HEK293 (cell line): ENCODE measurements at regions of chr10 and their contacts with region 1.

Region 1: DNA sequence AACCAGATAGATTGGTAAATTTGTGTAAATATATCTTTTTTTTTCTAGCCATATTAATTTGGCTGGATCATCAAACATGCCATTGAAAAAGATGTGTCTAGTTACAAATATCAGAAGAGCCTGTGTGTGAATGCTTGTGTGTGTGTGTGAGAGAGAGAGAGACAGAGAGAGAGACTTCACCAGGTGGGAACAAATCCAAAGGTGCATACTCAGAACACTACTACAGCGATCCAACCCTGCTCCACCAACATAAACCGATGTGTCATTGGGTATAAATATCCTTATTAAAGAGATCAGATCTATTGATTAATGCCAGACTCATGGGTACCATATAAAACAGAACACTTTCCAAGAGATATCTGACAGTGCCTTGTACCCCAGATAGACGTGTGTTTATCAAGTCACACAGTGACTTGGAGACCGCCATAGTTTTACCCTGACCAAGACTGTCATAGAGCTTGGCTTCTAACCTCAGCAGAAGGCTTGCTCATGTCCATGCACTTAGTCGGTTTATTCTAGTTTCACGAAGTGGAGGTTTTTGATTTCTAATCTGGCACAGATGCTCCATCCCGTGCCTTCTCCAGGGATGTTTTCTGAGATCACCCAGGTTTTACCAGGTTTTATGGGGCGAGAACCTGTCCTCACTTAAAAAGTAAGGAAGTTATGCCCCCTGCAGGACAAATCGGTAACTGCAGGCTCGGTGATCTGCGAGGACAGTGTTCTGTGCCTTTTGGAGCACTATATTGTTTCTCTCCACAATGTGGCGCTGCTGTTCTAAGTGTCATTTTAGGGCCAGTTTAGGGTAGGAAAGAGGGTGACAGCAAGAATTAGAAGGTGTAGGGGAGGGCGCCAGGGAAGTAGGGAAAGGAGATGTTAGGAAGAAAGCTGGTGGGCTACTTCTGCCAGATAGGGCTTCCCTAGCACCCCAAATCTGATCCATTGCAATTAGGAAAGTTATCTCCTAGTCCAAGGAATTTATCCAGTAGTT is 29.3 kb upstream of the WNT8B start:
- H3K4me3 ChIP-seq: no peak overlapping the region
- H3K27ac ChIP-seq: no peak overlapping the region
- H3K4me1 ChIP-seq: no peaks in the 10 kb centered on the region
- CTCF ChIP-seq: peak; percentile 99

Region 2: DNA sequence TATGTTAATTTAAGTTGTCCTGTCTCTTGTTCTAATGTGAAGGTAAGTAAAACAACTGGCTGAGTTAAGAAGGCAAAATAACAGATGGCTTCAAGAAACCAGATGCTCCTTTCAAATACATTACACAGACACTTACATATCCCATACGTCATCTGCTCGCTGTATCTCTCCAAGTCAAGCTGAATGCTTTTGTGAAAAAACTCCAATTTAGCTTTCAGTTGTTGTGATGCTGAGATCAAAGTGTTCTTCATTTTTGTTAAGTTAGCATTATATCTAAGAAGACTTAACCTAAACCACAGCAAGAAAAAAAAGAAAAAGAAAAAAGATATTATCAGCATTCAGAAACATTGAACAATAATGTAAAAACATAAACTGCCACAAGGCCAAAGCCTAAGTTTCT is 229.2 kb before region 1 on chr10:
- CTCF ChIA-PET with region 1: no interaction called
- POLR2A ChIA-PET with region 1: no interaction called
- H3K4me3 ChIP-seq: no peak overlapping the region
- H3K27ac ChIP-seq: no peak overlapping the region
- H3K4me1 ChIP-seq: no peaks in the 10 kb centered on the region
- CTCF ChIP-seq: no peak

Region 3: DNA sequence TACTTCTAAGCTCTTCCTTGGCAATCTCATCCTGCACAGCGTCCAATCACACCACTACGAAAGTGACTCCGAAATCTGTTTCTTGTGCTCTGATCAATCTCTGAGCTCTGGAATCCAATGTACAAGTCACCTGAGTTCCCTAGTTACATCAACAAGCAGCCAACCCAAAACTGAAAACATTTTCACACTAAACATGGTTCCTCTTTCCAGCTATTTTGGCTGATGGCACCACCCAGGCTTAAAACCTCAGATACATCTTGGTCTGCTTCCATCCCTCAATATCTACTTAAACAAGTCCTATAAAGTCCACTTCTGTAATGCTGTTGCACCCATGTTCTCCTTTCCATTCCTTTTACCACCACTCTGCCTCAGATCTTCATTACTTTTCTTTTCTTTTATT is 150.6 kb before region 1 on chr10:
- CTCF ChIA-PET with region 1: no interaction called
- POLR2A ChIA-PET with region 1: no interaction called
- H3K4me3 ChIP-seq: no peak overlapping the region
- H3K27ac ChIP-seq: no peak overlapping the region
- H3K4me1 ChIP-seq: no peaks in the 10 kb centered on the region; the same call in 1 of the 2 replicates
- CTCF ChIP-seq: no peak

Region 4: GRCh38 chr10:100303724-100304319 is 129.7 kb before region 1 on chr10:
- CTCF ChIA-PET with region 1: interaction called, 23 read pairs
- POLR2A ChIA-PET with region 1: no interaction called
- H3K4me3 ChIP-seq: no peak overlapping the region
- H3K27ac ChIP-seq: no peak overlapping the region
- H3K4me1 ChIP-seq: no peaks in the 10 kb centered on the region
- CTCF ChIP-seq: peak; percentile 28; the same call in 1 of the 2 replicates

Region 5: DNA sequence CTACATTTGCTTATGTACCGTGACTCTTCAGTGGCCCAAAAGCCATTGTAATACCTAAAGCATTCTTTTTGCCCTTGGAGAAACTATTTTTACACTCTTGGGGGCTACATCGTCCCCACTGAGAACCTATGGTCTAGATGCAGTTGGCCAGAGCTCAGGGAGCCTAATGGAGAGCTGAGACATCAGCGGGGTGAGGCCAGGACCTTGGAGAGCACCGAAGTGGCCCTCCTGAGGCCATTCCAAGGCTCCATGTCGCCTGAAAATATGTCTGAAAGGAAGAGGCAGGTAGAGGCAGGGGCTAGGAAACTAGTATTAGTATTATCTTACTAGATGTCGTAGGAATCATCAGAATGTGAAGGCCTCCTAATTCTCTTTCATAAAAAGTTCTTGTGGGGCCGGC is 108.4 kb before region 1 on chr10:
- CTCF ChIA-PET with region 1: interaction called, 10 read pairs
- POLR2A ChIA-PET with region 1: no interaction called
- H3K4me3 ChIP-seq: no peak overlapping the region
- H3K27ac ChIP-seq: no peak overlapping the region
- H3K4me1 ChIP-seq: no peaks in the 10 kb centered on the region
- CTCF ChIP-seq: no peak

Region 6: GRCh38 chr10:100364735-100365391 is 68.7 kb before region 1 on chr10:
- CTCF ChIA-PET with region 1: interaction called, 18 read pairs
- POLR2A ChIA-PET with region 1: no interaction called
- H3K4me3 ChIP-seq: no peak overlapping the region
- H3K27ac ChIP-seq: peak overlapping the region; percentile 75
- H3K4me1 ChIP-seq: peaks cover 11% of the 10 kb centered on the region
- CTCF ChIP-seq: no peak

Region 7: GRCh38 chr10:100419911-100420449 is 13.6 kb before region 1 on chr10:
- CTCF ChIA-PET with region 1: interaction called, 15 read pairs
- POLR2A ChIA-PET with region 1: no interaction called
- H3K4me3 ChIP-seq: no peak overlapping the region
- H3K27ac ChIP-seq: no peak overlapping the region
- H3K4me1 ChIP-seq: no peaks in the 10 kb centered on the region
- CTCF ChIP-seq: no peak

Region 8: GRCh38 chr10:100481462-100482081 is 48.0 kb after region 1 on chr10:
- CTCF ChIA-PET with region 1: interaction called, 34 read pairs
- POLR2A ChIA-PET with region 1: no interaction called
- H3K4me3 ChIP-seq: peak overlapping the region; percentile 40
- H3K27ac ChIP-seq: no peak overlapping the region; the same call in 1 of the 2 replicates
- H3K4me1 ChIP-seq: peaks cover 8% of the 10 kb centered on the region
- CTCF ChIP-seq: peak; percentile 29; the same call in 1 of the 2 replicates

Region 9: GRCh38 chr10:100518761-100519241 is 85.3 kb after region 1 on chr10:
- CTCF ChIA-PET with region 1: interaction called, 97 read pairs
- POLR2A ChIA-PET with region 1: no interaction called
- H3K4me3 ChIP-seq: no peak overlapping the region
- H3K27ac ChIP-seq: no peak overlapping the region
- H3K4me1 ChIP-seq: no peaks in the 10 kb centered on the region
- CTCF ChIP-seq: peak; percentile 39; the same call in 1 of the 2 replicates

Region 10: DNA sequence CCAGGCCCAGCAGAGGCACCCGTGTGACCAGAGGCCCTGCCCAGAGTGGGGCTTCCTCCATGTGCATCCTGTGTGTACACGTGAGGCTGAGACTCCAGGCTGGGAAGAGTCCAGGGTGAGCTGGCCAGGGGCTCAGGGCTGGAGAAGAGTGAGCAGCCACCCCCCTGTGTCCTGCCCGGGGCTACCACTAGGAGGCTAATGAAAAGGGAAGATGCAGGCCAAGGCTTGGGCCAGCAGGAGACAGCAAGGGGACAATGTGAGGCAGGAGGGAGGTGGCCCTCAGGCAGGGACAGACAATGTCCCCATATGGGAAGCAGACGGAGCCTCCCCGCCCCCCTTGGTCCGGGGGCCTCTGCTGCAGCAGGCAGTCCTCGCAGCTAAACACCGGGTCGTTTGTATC is 204.2 kb after region 1 on chr10:
- CTCF ChIA-PET with region 1: no interaction called
- POLR2A ChIA-PET with region 1: no interaction called
- H3K4me3 ChIP-seq: no peak overlapping the region
- H3K27ac ChIP-seq: no peak overlapping the region
- H3K4me1 ChIP-seq: no peaks in the 10 kb centered on the region
- CTCF ChIP-seq: peak; percentile 87

Region 11: GRCh38 chr10:100656454-100656853 is 222.9 kb after region 1 on chr10:
- CTCF ChIA-PET with region 1: no interaction called
- POLR2A ChIA-PET with region 1: no interaction called
- H3K4me3 ChIP-seq: peak overlapping the region; percentile 32
- H3K27ac ChIP-seq: no peak overlapping the region; the same call in 1 of the 2 replicates
- H3K4me1 ChIP-seq: peaks cover 9% of the 10 kb centered on the region
- CTCF ChIP-seq: no peak